GM18951 (cell line): ENCODE measurements at regions of chr14 and their contacts with region 1.

Region 1: GRCh38 chr14:23269193-23269592 is 16.7 kb downstream of the HOMEZ start:
- POLR2A ChIP-seq: no peak

Region 2: DNA sequence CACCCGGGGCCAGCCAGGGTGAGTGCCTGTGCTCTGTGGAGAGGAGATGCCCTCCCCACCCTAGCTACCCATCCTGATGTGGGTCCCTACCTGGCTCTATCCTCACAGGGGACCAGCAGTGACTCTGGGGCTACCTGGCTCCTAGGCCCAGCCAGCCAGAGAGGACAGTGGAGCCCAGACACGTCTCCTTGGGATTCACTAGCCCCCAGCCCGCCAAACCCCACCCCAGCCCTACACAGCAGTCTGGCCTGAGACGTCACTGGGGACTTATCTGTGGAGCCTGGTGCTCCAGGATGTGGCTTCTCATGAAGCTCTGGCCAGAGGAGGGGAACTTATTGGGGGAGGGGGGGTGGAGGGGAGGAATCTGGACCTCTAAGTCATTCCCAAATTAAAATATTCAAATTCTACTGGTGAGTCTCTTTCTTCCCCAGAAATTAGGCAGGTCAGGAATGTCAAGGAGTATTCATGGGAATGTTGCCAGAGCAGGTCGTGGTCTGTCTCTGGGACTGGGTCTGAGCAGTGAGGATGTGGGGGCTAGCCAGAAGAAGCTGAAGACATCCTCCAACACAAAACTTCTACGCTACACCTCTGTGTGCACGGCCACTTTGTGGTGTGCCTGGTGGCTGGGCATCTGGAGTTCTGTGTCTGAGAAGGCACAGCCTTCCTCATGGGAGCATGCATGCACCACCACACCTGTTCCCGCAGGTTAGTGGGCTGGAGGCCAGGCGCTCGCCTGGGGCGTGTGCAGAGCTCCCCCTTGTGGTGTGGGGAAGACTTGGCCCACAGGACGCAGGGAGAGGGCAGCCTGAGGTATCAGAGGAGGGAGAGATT is 110.4 kb after region 1 on chr14:
- in situ Hi-C with region 1: loop called (anchors 10 kb)
- POLR2A ChIP-seq: no peak